ENCODE measurements at regions of chr5 and their contacts with region 1.

Region 1: DNA sequence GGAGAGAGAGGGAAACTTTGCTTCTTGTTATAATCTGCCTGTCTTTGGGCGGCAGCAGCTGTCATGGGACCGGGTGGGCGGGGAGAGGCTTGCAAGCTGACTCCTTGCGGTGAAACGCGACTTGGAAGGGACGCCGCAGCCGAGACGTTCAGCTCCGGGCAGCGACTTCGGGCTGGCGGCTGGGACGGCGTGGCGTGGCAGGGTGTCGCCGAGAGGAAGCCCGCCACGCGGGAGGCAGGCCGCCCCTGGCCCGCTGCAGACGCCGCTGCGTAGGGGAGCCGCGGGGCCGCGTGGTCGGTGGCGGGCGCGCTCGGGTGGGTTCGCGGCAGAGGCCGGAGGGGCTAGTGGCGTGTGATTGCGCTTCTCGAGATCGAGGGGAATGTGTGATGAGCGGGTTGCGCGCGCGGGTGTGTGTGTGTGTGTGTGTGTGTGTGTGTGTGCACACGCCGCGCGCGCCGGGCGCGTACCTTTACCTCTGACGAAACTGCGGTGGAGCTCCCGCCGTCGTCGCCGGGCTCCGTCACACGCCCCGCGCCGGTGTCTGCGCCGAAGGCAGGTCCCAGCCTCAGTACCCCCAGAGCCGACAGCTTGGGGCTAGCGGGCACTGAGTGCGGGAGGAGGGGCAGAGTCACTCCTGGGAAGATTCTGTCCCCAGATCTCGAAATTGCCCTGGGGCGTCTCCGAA is 1.7 kb downstream of the PPARGC1B start:
- DNase-seq: peak; percentile 89
- H3K4me3 ChIP-seq: peak overlapping the region; percentile 60 to 71
- H3K27ac ChIP-seq: peak overlapping the region; percentile 72 to 77
- H3K4me1 ChIP-seq: no peaks in the 10 kb centered on the region
- H3K27me3 ChIP-seq: no peaks in the 10 kb centered on the region
- CTCF ChIP-seq: peak in 1 of 4 experiments; percentile 26
- POLR2A ChIP-seq: peak; percentile 80

Region 2: DNA sequence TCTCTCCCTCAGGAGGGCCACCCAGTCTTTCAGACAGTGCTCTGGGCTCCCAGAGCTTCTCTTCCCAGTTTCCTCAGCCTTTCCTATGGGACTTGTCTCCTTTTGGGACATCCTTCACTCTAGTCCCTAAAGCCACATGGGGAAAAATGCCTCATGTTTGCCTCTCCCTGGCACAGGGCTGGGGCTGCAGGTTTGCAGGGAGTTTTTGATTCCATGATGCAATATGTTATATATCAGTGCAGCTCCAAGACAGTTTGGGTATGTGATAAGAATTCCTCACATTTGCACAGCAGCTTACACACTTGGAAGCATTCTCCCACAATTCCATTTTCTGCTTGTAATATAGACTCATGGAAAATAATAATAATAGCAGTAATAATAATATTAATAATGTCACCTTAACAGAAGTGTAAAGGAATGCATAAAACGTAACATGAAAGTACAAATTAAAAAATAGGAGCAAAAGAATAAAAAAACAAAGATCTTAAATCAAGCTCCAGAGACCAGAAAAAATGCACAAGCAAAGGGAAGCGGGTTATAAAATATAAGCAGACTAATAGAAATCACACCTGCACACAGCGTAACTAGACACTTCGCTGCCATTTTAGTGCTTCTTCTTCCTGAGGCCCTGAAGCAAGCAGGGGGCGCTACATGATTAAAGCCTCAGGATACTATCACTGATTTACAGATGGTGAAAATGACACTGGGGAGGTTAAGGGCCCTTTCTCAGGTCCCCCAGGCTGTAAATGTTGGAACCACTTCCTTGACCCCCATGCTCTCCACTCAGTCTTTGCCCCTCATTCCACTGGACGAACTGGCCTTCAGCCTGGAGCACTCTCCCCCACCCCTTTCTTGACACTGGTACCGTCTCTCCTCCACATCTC is 282.7 kb before region 1 on chr5:
- intact Hi-C with region 1: no loop called
- DNase-seq: no peak
- H3K4me3 ChIP-seq: no peak overlapping the region
- H3K27ac ChIP-seq: peak overlapping the region; percentile 71
- H3K4me1 ChIP-seq: peaks cover 7% of the 10 kb centered on the region
- H3K27me3 ChIP-seq: no peaks in the 10 kb centered on the region
- CTCF ChIP-seq: peak in 3 of 4 experiments; percentile 21 to 43 (median 38)
- POLR2A ChIP-seq: no peak

Region 3: GRCh38 chr5:149702934-149703646 is 28.7 kb before region 1 on chr5:
- intact Hi-C with region 1: no loop called
- DNase-seq: no peak
- H3K4me3 ChIP-seq: no peak overlapping the region
- H3K27ac ChIP-seq: no peak overlapping the region
- H3K4me1 ChIP-seq: no peaks in the 10 kb centered on the region
- H3K27me3 ChIP-seq: no peaks in the 10 kb centered on the region
- CTCF ChIP-seq: no peak
- POLR2A ChIP-seq: no peak

Region 4: GRCh38 chr5:149775785-149776184 is 44.0 kb after region 1 on chr5:
- intact Hi-C with region 1: loop called (anchors 1 kb)
- DNase-seq: no peak
- H3K4me3 ChIP-seq: no peak overlapping the region
- H3K27ac ChIP-seq: no peak overlapping the region
- H3K4me1 ChIP-seq: peaks cover 5% of the 10 kb centered on the region
- H3K27me3 ChIP-seq: no peaks in the 10 kb centered on the region
- CTCF ChIP-seq: peak in 2 of 4 experiments; percentile 16 to 29
- POLR2A ChIP-seq: no peak

Region 5: GRCh38 chr5:149794487-149794971 is 62.7 kb after region 1 on chr5:
- intact Hi-C with region 1: loop called (anchors 5 kb)
- DNase-seq: no peak
- H3K4me3 ChIP-seq: no peak overlapping the region
- H3K27ac ChIP-seq: peak overlapping the region; percentile 43 to 56
- H3K4me1 ChIP-seq: no peaks in the 10 kb centered on the region
- H3K27me3 ChIP-seq: no peaks in the 10 kb centered on the region
- CTCF ChIP-seq: no peak
- POLR2A ChIP-seq: no peak

Region 6: GRCh38 chr5:149831492-149831891 is 99.7 kb after region 1 on chr5:
- intact Hi-C with region 1: no loop called
- DNase-seq: no peak
- H3K4me3 ChIP-seq: no peak overlapping the region
- H3K27ac ChIP-seq: no peak overlapping the region
- H3K4me1 ChIP-seq: no peaks in the 10 kb centered on the region
- H3K27me3 ChIP-seq: no peaks in the 10 kb centered on the region
- CTCF ChIP-seq: no peak
- POLR2A ChIP-seq: no peak

Region 7: GRCh38 chr5:150189728-150190502 is 458.1 kb after region 1 on chr5 and contains the start of gene SLC6A7:
- intact Hi-C with region 1: no loop called
- DNase-seq: no peak
- H3K4me3 ChIP-seq: no peak within 1 kb of the TSS
- H3K27ac ChIP-seq: no peak within 1 kb of the TSS
- H3K4me1 ChIP-seq: no peaks in the 10 kb centered on the region
- H3K27me3 ChIP-seq: peaks cover 5% of the 10 kb centered on the region
- CTCF ChIP-seq: no peak
- POLR2A ChIP-seq: no peak
- total RNA-seq, gene SLC6A7: not detected